RWPE1 (cell line): ENCODE measurements at regions of chr7 and their contacts with region 1.

Region 1: DNA sequence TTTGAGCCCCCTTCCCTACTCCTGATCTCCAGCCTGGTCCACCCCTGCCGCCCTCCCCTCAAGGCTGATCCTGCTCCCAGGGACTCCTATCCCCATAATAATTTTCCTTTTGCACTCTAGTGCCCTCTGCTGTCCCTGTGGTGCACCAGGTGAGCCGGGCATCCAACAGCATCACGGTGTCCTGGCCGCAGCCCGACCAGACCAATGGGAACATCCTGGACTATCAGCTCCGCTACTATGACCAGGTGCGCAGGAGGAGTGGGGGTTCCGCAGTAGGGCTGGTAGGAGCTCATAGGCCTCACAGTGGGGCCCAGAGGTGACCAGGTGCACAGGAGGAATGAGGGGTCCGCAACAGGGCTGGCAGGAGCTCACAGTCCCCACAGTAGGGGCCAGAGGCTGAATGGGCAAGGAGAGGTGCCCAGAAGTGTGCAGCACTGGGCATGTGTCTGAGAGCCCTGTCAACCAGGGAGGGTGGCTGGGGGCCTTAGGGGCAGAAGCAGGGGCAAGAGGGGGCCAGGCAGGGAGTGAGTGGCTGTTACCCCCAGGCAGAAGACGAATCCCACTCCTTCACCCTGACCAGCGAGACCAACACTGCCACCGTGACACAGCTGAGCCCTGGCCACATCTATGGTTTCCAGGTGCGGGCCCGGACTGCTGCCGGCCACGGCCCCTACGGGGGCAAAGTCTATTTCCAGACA is 11.6 kb downstream of the EPHB6 start:
- DNase-seq: no peak
- H3K27ac ChIP-seq: no peak overlapping the region
- CTCF ChIP-seq: peak; percentile 84

Region 2: GRCh38 chr7:142391191-142391992 is 475.1 kb before region 1 on chr7:
- CTCF ChIA-PET with region 1: no interaction called
- POLR2A ChIA-PET with region 1: no interaction called
- DNase-seq: no peak
- H3K27ac ChIP-seq: no peak overlapping the region
- CTCF ChIP-seq: no peak

Region 3: DNA sequence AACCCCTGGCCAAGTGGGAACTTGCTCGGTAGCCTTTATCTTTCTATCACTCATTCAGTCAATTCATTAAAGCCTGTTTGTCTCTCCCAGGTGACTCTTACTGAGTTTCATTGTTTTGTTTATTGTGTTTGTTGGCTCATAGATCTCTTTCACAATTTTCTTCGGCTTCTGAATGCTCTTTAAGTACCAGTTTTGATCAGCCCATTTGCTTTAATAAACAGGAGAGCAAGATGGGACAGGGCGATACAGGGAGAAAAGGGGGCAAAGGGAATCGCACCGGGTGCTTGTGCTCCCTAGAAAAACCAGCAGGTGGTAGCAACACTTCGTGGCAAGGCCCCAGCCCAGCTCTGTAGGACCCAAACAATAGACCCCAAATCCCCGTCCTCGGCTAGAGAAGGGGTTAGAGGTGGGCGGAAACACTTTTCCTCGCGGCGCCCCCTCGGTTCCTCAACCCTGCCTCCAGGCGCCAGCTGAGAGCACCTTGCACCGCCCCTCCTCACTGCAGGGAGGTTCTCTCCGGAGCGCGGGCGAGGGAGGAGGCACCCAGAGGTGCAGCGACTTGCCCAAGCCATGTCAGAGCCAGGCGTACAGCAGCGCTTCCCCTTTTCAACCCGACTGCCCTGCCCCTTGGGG is 12.7 kb before region 1 on chr7:
- CTCF ChIA-PET with region 1: interaction called, 13 read pairs
- POLR2A ChIA-PET with region 1: no interaction called
- DNase-seq: peak; percentile 62
- H3K27ac ChIP-seq: peak overlapping the region; percentile 97
- CTCF ChIP-seq: peak; percentile 97